Mammary epithelial cell (primary cell): ENCODE measurements at regions of chr4 and their contacts with region 1.

Region 1: DNA sequence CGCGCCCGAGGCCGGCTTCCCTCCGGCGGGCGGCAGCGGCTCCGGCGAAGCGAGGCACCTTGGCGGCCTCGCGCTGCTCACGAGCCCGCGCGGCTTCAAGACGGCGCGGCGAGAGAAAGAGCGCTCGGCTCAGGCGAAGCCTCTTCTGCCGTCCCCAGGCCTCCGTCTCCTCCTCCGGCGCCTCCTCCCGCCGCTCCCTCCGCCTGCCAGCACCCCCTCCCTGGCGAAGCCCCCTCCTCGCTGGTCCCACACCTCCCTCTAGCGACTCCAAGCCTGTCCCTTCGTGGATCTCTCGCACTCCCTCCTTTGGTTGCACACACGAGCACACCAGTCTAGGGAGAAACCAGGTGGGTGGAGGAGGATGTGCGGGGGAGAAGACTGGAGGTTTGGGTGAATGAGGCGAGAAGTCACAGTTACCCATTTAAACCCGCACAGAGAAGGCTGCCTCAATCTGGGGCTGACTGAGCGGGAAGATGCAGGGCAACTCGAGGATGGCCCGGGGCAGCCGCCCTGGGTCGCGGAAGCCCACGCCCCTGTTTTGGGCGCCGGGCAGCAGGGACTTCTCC is at the start of gene CAMK2D:
- DNase-seq: peak; percentile 85
- H3K4me3 ChIP-seq: peak within 1 kb of the TSS; percentile 77 to 78 (median 78)
- H3K27ac ChIP-seq: peak within 1 kb of the TSS; percentile 95
- H3K4me1 ChIP-seq: peaks cover 8% of the 10 kb centered on the region
- H3K27me3 ChIP-seq: no peaks in the 10 kb centered on the region
- CTCF ChIP-seq: peak; percentile 14 to 83
- total RNA-seq, gene CAMK2D: 36.3 to 63.8 TPM

Region 2: DNA sequence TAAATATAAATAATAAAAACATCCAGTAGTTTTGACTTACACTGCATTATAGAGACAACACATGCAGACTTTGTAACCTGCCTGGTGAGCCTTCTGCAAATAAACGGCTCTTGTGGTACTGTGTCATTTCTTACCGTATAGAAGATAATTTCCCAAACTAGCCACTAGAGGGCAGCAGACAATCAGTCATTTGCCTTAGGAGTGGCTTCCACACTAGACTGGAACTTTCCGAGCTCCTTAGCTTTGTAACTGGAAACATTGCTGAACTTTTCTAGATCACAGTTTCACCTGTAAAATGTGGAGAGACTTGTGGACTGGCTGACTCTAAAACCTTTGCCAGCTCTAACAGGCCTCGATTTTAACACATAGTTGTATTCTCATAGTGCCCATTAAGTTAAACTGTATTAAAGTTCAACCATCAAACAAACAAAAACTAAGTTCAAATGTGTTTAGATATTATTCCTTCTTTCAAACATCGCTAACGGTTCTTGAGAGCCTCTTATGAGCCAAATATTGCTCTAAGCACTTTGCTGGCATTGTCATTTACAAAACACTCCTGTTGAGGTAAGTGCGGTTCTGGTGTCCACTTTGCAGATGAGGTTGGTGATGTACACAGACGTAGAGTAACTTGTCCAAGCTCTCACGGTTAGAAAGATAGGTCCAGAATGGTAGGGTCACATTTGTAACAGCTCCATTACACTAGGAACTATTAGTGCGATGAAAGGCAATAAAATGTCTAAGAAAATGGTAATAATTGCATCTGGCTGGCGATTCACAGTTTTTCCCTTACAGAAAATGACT is 366.8 kb before region 1 on chr4:
- CTCF ChIA-PET with region 1: no interaction called
- dilution Hi-C with region 1: no loop called
- in situ Hi-C with region 1: loop called in 1 of 2 experiments (anchors 25 kb)
- intact Hi-C with region 1: loop called (anchors 1 kb)
- DNase-seq: peak; percentile 78
- H3K4me3 ChIP-seq: no peak overlapping the region
- H3K27ac ChIP-seq: no peak overlapping the region
- H3K4me1 ChIP-seq: no peaks in the 10 kb centered on the region
- H3K27me3 ChIP-seq: no peaks in the 10 kb centered on the region
- CTCF ChIP-seq: peak; percentile 57 to 72

Region 3: DNA sequence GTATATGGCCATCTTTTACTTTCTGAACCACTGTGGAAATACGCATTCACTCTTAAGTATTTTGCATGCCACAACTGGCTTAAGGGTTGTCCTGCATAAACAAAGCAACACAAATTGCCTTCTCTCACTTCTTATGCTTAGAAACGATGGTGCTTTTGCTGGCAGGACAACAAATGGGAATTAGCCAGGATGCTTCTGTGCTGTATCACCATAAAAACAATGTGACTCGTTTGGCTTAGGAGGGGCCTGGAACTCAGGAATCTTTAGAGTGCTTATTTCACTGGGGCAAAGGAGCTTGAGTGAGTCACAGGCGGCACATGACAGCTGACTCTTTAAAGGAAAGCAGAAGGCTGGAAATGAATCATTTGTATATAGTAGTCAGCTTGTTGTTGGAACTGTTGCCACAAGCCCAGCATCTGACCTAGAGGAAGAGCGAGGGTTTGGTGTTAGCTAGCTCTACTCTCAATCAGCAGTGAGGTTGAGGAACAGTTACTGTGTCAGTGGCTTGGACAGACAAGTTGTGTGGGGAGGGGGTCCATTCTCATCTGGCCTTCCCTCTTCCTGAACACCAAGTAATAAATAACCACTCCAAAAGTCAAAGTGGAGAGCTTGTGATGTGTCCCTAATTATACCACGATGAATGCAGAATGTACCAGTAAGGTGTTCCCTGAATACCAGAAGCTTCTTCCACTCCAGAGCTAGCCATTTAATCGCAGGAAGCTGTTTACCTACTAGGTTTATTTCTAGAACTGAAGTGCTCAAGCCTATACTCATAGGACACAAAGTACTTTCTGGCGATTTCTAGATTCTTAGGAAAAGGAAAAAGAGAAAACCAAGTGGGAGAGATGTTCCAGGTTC is 293.3 kb before region 1 on chr4:
- CTCF ChIA-PET with region 1: no interaction called
- dilution Hi-C with region 1: no loop called
- in situ Hi-C with region 1: no loop called
- intact Hi-C with region 1: loop called (anchors 2 kb)
- DNase-seq: peak; percentile 100
- H3K4me3 ChIP-seq: peak overlapping the region in 2 of 3 experiments; percentile 9 to 26
- H3K27ac ChIP-seq: peak overlapping the region; percentile 99
- H3K4me1 ChIP-seq: peaks cover 26% of the 10 kb centered on the region
- H3K27me3 ChIP-seq: no peaks in the 10 kb centered on the region
- CTCF ChIP-seq: no peak

Region 4: GRCh38 chr4:113547487-113548042 is 214.1 kb before region 1 on chr4:
- CTCF ChIA-PET with region 1: no interaction called
- dilution Hi-C with region 1: no loop called
- in situ Hi-C with region 1: loop called in 1 of 2 experiments (anchors 5 kb)
- intact Hi-C with region 1: loop called (anchors 1 kb)
- DNase-seq: peak; percentile 98
- H3K4me3 ChIP-seq: no peak overlapping the region
- H3K27ac ChIP-seq: peak overlapping the region; percentile 34
- H3K4me1 ChIP-seq: no peaks in the 10 kb centered on the region
- H3K27me3 ChIP-seq: no peaks in the 10 kb centered on the region
- CTCF ChIP-seq: peak; percentile 98 to 99

Region 5: DNA sequence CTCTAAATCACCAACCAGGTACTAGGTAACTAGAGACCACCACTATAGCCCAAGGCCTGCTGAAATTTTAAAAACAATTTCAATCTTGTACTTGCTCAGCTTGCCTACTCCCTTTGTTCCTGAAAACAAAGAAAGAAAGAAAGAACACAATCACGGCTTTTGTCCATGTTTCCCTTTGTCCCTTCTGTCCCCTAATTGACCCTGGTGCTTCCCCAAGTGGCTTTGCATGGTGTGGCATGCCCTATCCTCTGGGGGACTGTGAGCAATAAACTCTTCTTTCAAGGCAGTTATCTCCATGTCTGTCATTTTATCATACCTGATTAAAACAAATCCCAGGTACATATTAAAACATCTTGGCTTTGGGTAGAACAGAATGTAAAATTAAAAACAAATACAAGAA is 123.0 kb after region 1 on chr4:
- CTCF ChIA-PET with region 1: no interaction called
- dilution Hi-C with region 1: no loop called
- in situ Hi-C with region 1: no loop called
- intact Hi-C with region 1: loop called (anchors 5 kb)
- DNase-seq: no peak
- H3K4me3 ChIP-seq: no peak overlapping the region
- H3K27ac ChIP-seq: no peak overlapping the region
- H3K4me1 ChIP-seq: no peaks in the 10 kb centered on the region
- H3K27me3 ChIP-seq: no peaks in the 10 kb centered on the region
- CTCF ChIP-seq: no peak

Region 6: GRCh38 chr4:114077610-114078009 is 315.9 kb after region 1 on chr4:
- CTCF ChIA-PET with region 1: no interaction called
- dilution Hi-C with region 1: no loop called
- in situ Hi-C with region 1: no loop called
- intact Hi-C with region 1: loop called (anchors 5 kb)
- DNase-seq: peak; percentile 73
- H3K4me3 ChIP-seq: no peak overlapping the region
- H3K27ac ChIP-seq: peak overlapping the region; percentile 19
- H3K4me1 ChIP-seq: peaks cover 13% of the 10 kb centered on the region
- H3K27me3 ChIP-seq: no peaks in the 10 kb centered on the region
- CTCF ChIP-seq: no peak